AG04449 (cell line): ENCODE measurements at regions of chr9 and their contacts with region 1.

Region 1: GRCh38 chr9:93159601-93160471 is 24.1 kb upstream of the WNK2 start:
- DNase-seq: no peak
- H3K4me3 ChIP-seq: no peak overlapping the region
- CTCF ChIP-seq: peak; percentile 100

Region 2: DNA sequence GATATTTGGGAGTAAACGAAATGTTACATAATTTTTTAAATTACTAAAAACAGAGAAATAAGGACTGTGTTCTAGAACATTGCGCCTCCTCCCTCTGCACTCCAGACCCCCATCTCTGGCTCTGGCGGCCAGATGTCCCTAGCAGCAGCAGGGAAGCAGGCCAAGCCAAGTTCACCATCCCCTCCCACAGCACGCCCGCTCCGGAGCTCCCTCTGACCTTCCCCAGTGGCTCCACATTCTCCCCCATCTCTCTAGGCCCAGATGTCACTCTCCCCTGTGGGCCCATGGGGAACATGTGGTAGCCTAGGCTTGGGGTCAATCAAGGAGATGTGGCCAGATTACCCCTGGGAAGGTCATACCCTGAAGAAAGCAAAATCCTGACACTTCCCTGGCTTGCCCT is 17.8 kb after region 1 on chr9:
- CTCF ChIA-PET with region 1: no interaction called
- POLR2A ChIA-PET with region 1: no interaction called
- DNase-seq: no peak
- H3K4me3 ChIP-seq: no peak overlapping the region
- CTCF ChIP-seq: no peak

Region 3: DNA sequence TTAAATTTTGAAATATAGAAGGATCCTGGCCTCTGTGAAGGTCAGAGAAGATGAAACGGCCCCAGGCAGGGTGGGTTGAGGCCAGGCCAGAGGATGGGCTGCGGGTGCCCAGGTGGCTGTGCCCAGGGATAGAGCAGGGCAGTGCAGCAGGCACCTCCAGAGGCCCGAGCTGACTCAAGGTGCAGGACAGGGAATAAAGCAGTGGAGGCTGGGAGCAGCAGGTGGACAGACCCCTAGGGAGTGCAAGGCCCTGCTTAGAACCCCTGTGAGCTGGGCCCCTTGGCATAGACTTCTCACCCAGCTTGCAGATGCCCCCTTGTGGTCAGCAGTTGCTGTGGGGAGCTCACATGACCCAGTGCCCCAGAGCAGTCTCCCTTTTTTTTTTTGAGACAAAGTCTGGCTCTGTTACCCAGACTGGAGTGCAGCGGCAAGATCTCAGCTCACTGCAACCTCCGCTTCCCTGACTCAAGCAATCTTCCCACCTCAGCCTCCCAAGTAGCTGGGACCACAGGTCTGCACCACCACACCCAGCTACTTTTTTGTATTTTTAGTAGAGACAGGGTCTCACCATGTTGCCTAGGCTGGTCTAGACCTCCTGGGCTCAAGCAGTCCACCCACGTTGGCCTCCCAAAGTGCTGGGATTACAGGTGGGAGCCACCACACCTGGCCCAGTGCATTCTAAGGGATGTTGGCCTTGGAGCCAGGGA is 142.9 kb after region 1 on chr9:
- CTCF ChIA-PET with region 1: interaction called, 18 read pairs
- POLR2A ChIA-PET with region 1: no interaction called
- DNase-seq: peak; percentile 10
- H3K4me3 ChIP-seq: no peak overlapping the region
- CTCF ChIP-seq: peak; percentile 67